MCF 10A (cell line): ENCODE measurements at regions of chr1 and their contacts with region 1.

Region 1: GRCh38 chr1:200510228-200510623 is 100.4 kb upstream of the ZNF281 start:
- DNase-seq: peak; percentile 98
- H3K4me3 Mint-ChIP-seq: no peak overlapping the region
- H3K27ac Mint-ChIP-seq: no peak overlapping the region
- H3K4me1 Mint-ChIP-seq: peaks cover 11% of the 10 kb centered on the region
- H3K27me3 Mint-ChIP-seq: peaks cover 24% of the 10 kb centered on the region
- CTCF ChIP-seq: peak; percentile 99

Region 2: GRCh38 chr1:198756470-198756869 is 1753.8 kb before region 1 on chr1:
- CTCF ChIA-PET with region 1: interaction called, 5 read pairs
- POLR2A ChIA-PET with region 1: no interaction called
- intact Hi-C with region 1: loop called (anchors 5 kb)
- DNase-seq: peak; percentile 45
- H3K4me3 Mint-ChIP-seq: no peak overlapping the region
- H3K27ac Mint-ChIP-seq: no peak overlapping the region
- H3K4me1 Mint-ChIP-seq: no peaks in the 10 kb centered on the region
- H3K27me3 Mint-ChIP-seq: no peaks in the 10 kb centered on the region
- CTCF ChIP-seq: peak; percentile 50

Region 3: GRCh38 chr1:199551967-199552565 is 958.2 kb before region 1 on chr1:
- CTCF ChIA-PET with region 1: interaction called, 5 read pairs
- POLR2A ChIA-PET with region 1: no interaction called
- intact Hi-C with region 1: loop called (anchors 2 kb)
- DNase-seq: peak; percentile 74
- H3K4me3 Mint-ChIP-seq: no peak overlapping the region
- H3K27ac Mint-ChIP-seq: no peak overlapping the region
- H3K4me1 Mint-ChIP-seq: no peaks in the 10 kb centered on the region
- H3K27me3 Mint-ChIP-seq: no peaks in the 10 kb centered on the region
- CTCF ChIP-seq: peak; percentile 96

Region 4: GRCh38 chr1:200139661-200140250 is 370.5 kb before region 1 on chr1:
- CTCF ChIA-PET with region 1: interaction called, 6 read pairs
- POLR2A ChIA-PET with region 1: no interaction called
- intact Hi-C with region 1: loop called (anchors 2 kb)
- DNase-seq: peak; percentile 81
- H3K4me3 Mint-ChIP-seq: no peak overlapping the region
- H3K27ac Mint-ChIP-seq: no peak overlapping the region
- H3K4me1 Mint-ChIP-seq: no peaks in the 10 kb centered on the region
- H3K27me3 Mint-ChIP-seq: no peaks in the 10 kb centered on the region
- CTCF ChIP-seq: peak; percentile 83

Region 5: GRCh38 chr1:200317236-200317635 is 193.0 kb before region 1 on chr1:
- CTCF ChIA-PET with region 1: interaction called, 12 read pairs
- POLR2A ChIA-PET with region 1: interaction called, 3 read pairs
- intact Hi-C with region 1: no loop called
- DNase-seq: no peak
- H3K4me3 Mint-ChIP-seq: no peak overlapping the region
- H3K27ac Mint-ChIP-seq: no peak overlapping the region
- H3K4me1 Mint-ChIP-seq: peaks cover 5% of the 10 kb centered on the region
- H3K27me3 Mint-ChIP-seq: no peaks in the 10 kb centered on the region
- CTCF ChIP-seq: no peak

Region 6: DNA sequence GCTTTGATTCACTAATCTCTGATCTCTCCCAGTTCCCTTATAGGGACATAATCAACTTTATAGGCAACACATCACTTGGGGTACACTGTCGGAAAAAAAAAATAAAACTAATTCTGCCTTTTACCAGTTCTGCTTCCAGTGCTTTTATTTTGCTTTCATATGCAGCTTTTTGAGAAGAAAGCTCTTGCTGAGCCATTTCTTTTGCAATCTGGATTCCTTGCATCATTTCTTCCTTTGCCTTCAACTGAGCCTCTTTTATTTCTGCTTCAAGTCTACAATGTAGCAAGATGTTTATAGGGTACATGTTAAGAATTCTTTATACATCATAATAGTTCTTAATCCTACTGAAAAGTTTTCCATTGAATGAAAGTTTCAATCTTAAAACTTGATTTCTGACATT is 79.8 kb after region 1 on chr1:
- CTCF ChIA-PET with region 1: no interaction called
- POLR2A ChIA-PET with region 1: no interaction called
- intact Hi-C with region 1: no loop called
- DNase-seq: no peak
- H3K4me3 Mint-ChIP-seq: no peak overlapping the region
- H3K27ac Mint-ChIP-seq: no peak overlapping the region
- H3K4me1 Mint-ChIP-seq: no peaks in the 10 kb centered on the region
- H3K27me3 Mint-ChIP-seq: no peaks in the 10 kb centered on the region
- CTCF ChIP-seq: no peak